ENCODE measurements at regions of chr9 and their contacts with region 1.

Region 1: GRCh38 chr9:94867281-94867841 is 140.9 kb downstream of the AOPEP start:
- DNase-seq: peak; percentile 78 to 93
- H3K4me3 ChIP-seq: peak overlapping the region; percentile 34; the same call in 1 of the 2 replicates
- H3K27ac ChIP-seq: peak overlapping the region; percentile 100
- H3K4me1 ChIP-seq: peaks cover 82% of the 10 kb centered on the region
- H3K27me3 ChIP-seq: no peaks in the 10 kb centered on the region
- CTCF ChIP-seq: no peak

Region 2: DNA sequence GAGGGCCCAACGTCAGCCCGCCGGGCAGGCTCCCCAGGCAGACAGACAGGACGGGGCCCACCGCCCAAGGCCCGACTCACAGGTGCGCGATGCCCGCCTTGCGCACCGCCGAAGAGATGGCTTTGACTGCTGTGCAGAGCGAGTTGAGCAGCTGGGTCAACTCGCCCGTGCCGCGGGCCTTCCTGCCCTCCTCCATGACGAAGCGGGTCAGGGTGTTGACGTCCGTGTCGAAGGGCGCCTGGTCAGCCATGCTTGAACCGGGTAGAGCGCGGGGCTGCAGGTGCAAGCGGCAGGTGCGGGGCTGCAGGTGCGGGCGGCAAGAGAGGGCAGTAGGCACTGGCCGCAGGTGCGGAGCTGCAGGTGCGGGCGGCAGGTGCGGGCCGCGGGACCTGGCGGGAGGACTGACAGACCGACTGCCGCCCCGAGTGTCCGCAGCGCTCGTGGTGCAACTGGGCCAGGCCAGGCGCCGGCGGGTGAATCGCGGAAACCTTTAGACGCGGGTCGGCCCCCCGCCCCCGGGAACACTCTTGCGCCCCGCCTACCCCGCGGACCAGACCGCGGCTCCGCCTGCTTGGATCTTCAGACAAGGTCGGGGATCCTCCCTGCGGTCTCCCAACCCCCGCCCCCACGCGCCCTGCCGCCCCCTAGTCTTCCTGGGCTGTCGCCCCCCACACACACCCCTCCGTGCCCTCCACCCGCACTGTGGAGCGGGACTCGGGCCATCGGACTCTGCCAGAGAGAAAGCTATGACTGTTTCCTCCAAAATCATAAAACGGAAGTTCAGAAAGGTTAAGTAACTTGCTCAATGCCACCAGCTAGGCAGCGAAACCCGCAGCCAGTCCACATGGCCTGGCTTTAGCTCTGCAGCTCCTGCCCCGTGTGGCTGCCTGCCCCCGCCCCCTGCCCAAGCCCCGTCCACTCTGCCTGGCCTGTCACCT is 228.0 kb before region 1 on chr9 and contains the start of gene FBP1:
- CTCF ChIA-PET with region 1: interaction called, 11 read pairs
- POLR2A ChIA-PET with region 1: no interaction called
- intact Hi-C with region 1: no loop called
- DNase-seq: peak; percentile 44 to 60
- H3K4me3 ChIP-seq: peak within 1 kb of the TSS; percentile 76
- H3K27ac ChIP-seq: peak within 1 kb of the TSS; percentile 84
- H3K4me1 ChIP-seq: peaks cover 49% of the 10 kb centered on the region
- H3K27me3 ChIP-seq: no peaks in the 10 kb centered on the region
- CTCF ChIP-seq: no peak
- total RNA-seq, gene FBP1: 34.9 and 35.0 TPM in 2 replicates

Region 3: GRCh38 chr9:94783102-94783664 is 84.2 kb before region 1 on chr9:
- CTCF ChIA-PET with region 1: interaction called, 3 read pairs
- POLR2A ChIA-PET with region 1: interaction called, 3 read pairs
- intact Hi-C with region 1: loop called (anchors 1 kb)
- DNase-seq: peak; percentile 98 to 99
- H3K4me3 ChIP-seq: no peak overlapping the region
- H3K27ac ChIP-seq: peak overlapping the region; percentile 78
- H3K4me1 ChIP-seq: peaks cover 30% of the 10 kb centered on the region
- H3K27me3 ChIP-seq: no peaks in the 10 kb centered on the region
- CTCF ChIP-seq: peak; percentile 84

Region 4: DNA sequence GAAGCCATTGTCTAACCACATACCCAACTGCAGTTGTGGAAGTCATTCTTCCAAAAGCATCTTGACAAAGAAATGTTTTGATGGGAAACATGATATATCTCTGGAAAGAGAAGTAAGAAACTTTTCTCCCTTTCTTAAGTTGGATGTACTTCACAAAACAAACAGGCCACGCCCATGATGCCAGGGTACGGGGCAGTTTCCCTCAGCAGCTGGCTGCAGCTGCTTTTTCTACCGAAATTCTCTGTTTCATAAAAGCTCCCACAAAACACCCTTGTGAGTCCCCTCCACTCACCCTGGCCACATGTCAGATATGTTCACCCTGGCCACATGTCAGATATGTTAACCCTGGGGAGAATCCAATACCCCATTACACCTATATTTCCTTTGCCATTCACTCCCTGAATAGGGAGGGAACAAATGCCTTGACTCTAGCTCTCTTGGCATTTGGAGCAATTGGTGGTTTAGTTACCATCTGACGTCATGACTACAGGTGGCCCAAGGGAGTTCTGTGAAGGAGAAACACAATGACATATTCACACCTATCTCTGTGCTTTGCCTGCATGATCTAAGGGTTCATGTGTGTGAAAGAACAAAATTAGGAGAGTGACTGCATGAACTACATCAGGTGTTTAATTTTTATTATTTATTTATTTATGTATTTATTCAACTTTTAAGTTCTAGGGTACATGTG is 37.8 kb before region 1 on chr9:
- CTCF ChIA-PET with region 1: no interaction called
- POLR2A ChIA-PET with region 1: no interaction called
- intact Hi-C with region 1: no loop called
- DNase-seq: no peak
- H3K4me3 ChIP-seq: no peak overlapping the region
- H3K27ac ChIP-seq: no peak overlapping the region
- H3K4me1 ChIP-seq: peaks cover 19% of the 10 kb centered on the region
- H3K27me3 ChIP-seq: no peaks in the 10 kb centered on the region
- CTCF ChIP-seq: no peak

Region 5: GRCh38 chr9:94847486-94847885 is 19.9 kb before region 1 on chr9:
- CTCF ChIA-PET with region 1: no interaction called
- POLR2A ChIA-PET with region 1: interaction called, 20 read pairs
- intact Hi-C with region 1: no loop called
- DNase-seq: peak in 1 of 2 experiments; percentile 57
- H3K4me3 ChIP-seq: no peak overlapping the region
- H3K27ac ChIP-seq: no peak overlapping the region
- H3K4me1 ChIP-seq: peaks cover 6% of the 10 kb centered on the region
- H3K27me3 ChIP-seq: no peaks in the 10 kb centered on the region
- CTCF ChIP-seq: no peak

Region 6: DNA sequence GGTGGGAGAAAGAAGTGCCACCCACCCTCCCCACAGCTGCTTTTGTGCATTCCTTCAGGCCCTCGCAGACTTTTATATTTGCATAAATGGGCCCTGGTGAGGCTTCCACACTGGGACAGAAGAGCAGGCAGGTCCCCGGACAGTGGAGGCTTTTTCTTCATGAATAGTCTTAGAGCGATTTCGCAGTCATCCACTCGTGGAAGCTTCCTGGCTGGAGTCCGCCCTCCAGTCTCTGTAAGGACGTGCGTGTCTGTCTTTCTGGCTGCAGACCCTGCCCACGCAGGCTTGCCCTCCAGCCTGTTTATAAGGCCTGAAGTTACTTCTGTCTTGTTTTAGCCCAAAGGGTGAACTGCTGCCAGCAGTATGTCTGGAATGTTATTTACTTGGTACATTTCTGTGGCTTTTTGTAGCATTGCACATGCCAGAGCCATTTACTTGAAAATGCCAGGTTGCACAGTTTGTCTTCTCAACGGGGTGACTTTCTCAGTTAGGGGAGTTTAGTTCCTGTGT is 54.8 kb after region 1 on chr9:
- CTCF ChIA-PET with region 1: interaction called, 3 read pairs
- POLR2A ChIA-PET with region 1: interaction called, 6 read pairs
- intact Hi-C with region 1: loop called (anchors 1 kb)
- DNase-seq: peak; percentile 79 to 99
- H3K4me3 ChIP-seq: peak overlapping the region; percentile 46
- H3K27ac ChIP-seq: peak overlapping the region; percentile 97
- H3K4me1 ChIP-seq: peaks cover 92% of the 10 kb centered on the region
- H3K27me3 ChIP-seq: no peaks in the 10 kb centered on the region
- CTCF ChIP-seq: no peak

Region 7: GRCh38 chr9:95092262-95093072 is 225.1 kb after region 1 on chr9:
- CTCF ChIA-PET with region 1: no interaction called
- POLR2A ChIA-PET with region 1: interaction called, 7 read pairs
- intact Hi-C with region 1: loop called (anchors 1 kb)
- DNase-seq: peak; percentile 87 to 96
- H3K4me3 ChIP-seq: no peak overlapping the region
- H3K27ac ChIP-seq: peak overlapping the region; percentile 88
- H3K4me1 ChIP-seq: peaks cover 47% of the 10 kb centered on the region
- H3K27me3 ChIP-seq: no peaks in the 10 kb centered on the region
- CTCF ChIP-seq: no peak

Measured in PC-9 (cell line).